Activated B cell treated with CpG ODN at 0.5 μM for 24 hours (primary cell): ENCODE measurements at regions of chr3 and their contacts with region 1.

Region 1: GRCh38 chr3:25789596-25790556 is at the start of gene OXSM:
- DNase-seq: peak; percentile 82
- ATAC-seq: peak; percentile 90
- H3K4me3 Mint-ChIP-seq: peak within 1 kb of the TSS; percentile 95
- H3K27ac Mint-ChIP-seq: peak within 1 kb of the TSS; percentile 99
- H3K4me1 Mint-ChIP-seq: peaks cover 34% of the 10 kb centered on the region
- H3K27me3 Mint-ChIP-seq: no peaks in the 10 kb centered on the region
- CTCF ChIP-seq: no peak
- total RNA-seq, gene OXSM: 12.6 and 14.2 TPM in 2 replicates

Region 2: GRCh38 chr3:24494618-24495325 is 1295.1 kb before region 1 on chr3 and contains the start of gene THRB:
- CTCF ChIA-PET with region 1: no interaction called
- POLR2A ChIA-PET with region 1: no interaction called
- intact Hi-C with region 1: loop called (anchors 10 kb)
- DNase-seq: peak; percentile 57
- ATAC-seq: peak; percentile 72
- H3K4me3 Mint-ChIP-seq: peak within 1 kb of the TSS; percentile 90
- H3K27ac Mint-ChIP-seq: peak within 1 kb of the TSS; percentile 78
- H3K4me1 Mint-ChIP-seq: peaks cover 15% of the 10 kb centered on the region
- H3K27me3 Mint-ChIP-seq: peaks cover 35% of the 10 kb centered on the region
- CTCF ChIP-seq: no peak
- total RNA-seq, gene THRB: 0.31 and 0.86 TPM in 2 replicates

Region 3: DNA sequence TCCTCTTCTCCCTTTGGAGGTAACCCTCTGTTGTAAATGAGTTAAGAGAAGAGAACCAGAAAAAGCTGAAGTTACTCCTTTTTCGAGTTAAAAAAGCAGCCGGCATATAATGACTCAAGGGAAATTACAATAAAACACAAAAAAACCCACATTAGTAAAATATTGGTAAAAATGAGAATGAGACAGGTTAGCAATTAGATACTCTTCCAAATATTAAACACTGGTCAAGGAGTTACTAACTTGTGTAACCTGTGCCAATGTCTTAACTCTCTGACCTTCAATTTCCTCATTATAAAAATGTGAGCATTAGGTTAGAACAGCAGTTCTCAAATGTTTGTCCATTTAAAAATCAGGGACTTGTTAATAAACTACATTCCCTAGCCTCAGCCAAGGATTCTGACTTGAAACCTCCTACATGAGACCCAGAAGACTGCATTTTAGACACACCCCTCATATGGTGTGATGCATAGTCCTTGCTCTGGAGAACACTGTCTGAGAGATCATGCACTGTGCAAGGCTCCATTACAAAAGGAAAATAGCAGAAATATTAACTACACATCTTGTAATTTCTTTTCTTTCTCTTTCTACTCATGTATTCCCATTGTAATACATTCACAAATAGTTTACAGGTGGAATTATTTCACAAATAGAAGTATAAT is 82.5 kb before region 1 on chr3:
- CTCF ChIA-PET with region 1: no interaction called
- POLR2A ChIA-PET with region 1: no interaction called
- intact Hi-C with region 1: no loop called
- DNase-seq: no peak
- ATAC-seq: no peak
- H3K4me3 Mint-ChIP-seq: no peak overlapping the region
- H3K27ac Mint-ChIP-seq: no peak overlapping the region
- H3K4me1 Mint-ChIP-seq: no peaks in the 10 kb centered on the region
- H3K27me3 Mint-ChIP-seq: peaks cover 4% of the 10 kb centered on the region
- CTCF ChIP-seq: no peak

Region 4: DNA sequence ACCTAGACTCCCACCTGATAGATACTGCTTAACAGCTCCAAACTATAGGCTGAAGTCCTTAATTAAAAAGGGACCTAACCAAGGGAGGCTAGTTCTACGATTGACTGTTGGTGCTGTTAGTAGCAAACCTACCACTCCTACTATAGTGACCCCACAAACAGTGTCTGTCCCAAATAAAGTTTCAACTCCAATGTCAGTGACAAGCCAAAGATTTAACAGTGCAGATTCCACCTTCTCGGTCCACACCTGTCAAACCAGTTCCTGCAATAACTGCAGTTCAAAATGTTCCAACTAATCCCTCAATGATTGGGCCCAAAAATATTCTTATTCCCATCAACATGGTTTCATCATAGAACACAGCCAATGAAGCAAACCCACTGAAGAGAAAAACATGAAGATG is 34.6 kb before region 1 on chr3:
- CTCF ChIA-PET with region 1: no interaction called
- POLR2A ChIA-PET with region 1: no interaction called
- intact Hi-C with region 1: loop called (anchors 5 kb)
- DNase-seq: no peak
- ATAC-seq: no peak
- H3K4me3 Mint-ChIP-seq: no peak overlapping the region
- H3K27ac Mint-ChIP-seq: no peak overlapping the region
- H3K4me1 Mint-ChIP-seq: no peaks in the 10 kb centered on the region
- H3K27me3 Mint-ChIP-seq: no peaks in the 10 kb centered on the region
- CTCF ChIP-seq: no peak